RWPE1 (cell line): ENCODE measurements at regions of chr3 and their contacts with region 1.

Region 1: GRCh38 chr3:189961525-189962161 is 159.1 kb downstream of the P3H2 start:
- DNase-seq: peak; percentile 85
- H3K27ac ChIP-seq: no peak overlapping the region
- CTCF ChIP-seq: peak; percentile 92

Region 2: DNA sequence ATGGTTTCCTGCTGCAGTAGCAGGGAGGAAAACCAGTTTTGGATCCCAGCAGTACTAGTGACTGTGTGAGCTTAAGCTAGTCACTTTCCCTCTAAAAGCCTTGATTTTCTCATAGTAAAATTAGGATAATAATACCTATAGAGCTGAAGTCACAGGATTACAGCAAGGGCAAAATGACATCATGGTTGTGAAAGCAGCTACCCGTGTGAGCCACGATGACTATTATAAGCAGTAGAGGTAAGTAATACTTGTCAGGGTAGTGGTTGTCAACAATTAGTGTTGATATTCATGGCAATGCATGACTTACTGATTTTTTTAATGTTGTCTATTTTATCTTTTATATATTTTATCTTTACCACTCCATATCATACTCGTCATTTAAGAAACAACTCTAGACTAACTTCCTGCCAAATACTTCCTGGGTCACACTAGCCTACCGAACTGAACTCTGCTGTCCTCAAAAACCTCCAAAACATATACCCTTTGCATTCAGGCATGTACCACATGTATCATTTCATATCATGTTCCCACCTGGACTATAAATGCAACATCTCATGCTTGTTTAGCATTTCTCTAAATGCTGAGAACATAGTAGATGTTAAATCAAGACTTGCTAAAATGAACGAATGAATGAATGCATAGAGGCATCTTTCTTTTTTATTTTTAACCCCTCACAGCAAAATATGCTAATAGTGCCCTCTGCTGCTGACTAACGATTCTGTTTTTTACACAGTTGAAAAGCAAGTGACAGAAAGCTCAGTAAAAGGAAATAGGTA is 13.5 kb before region 1 on chr3:
- CTCF ChIA-PET with region 1: interaction called, 10 read pairs
- POLR2A ChIA-PET with region 1: no interaction called
- DNase-seq: peak; percentile 31
- H3K27ac ChIP-seq: no peak overlapping the region
- CTCF ChIP-seq: peak; percentile 76